Calu3 (cell line): ENCODE measurements at regions of chrX and their contacts with region 1.

Region 1: DNA sequence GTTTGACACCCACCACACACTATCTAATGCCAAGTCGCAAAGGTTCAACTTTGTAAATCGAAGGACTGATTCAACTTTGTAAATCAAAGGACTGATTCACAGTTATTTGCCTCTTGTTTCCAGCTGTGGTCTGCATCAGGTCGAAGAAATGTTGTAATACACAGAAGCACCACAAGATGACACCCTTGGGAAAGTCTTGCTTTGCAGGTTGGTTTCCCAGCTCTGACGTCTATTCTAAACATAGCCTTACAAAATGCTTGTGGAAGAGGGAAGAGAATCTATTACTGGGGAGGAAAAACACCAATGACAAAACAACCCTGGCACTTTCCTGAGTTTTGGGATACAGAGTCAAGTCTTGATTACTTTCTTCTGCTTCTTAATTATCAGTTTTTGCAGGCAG is 35.3 kb downstream of the SUPT20HL1 start:
- DNase-seq: peak; percentile 61
- H3K4me3 Mint-ChIP-seq: no peak overlapping the region
- H3K27ac Mint-ChIP-seq: no peak overlapping the region
- H3K4me1 Mint-ChIP-seq: no peaks in the 10 kb centered on the region
- H3K27me3 Mint-ChIP-seq: peaks cover 56% of the 10 kb centered on the region
- CTCF ChIP-seq: no peak

Region 2: GRCh38 chrX:24259544-24260240 is 136.1 kb before region 1 on chrX:
- CTCF ChIA-PET with region 1: interaction called, 4 read pairs
- intact Hi-C with region 1: loop called (anchors 10 kb)
- DNase-seq: peak; percentile 43
- H3K4me3 Mint-ChIP-seq: no peak overlapping the region
- H3K27ac Mint-ChIP-seq: no peak overlapping the region
- H3K4me1 Mint-ChIP-seq: peaks cover 20% of the 10 kb centered on the region
- H3K27me3 Mint-ChIP-seq: no peaks in the 10 kb centered on the region
- CTCF ChIP-seq: no peak

Region 3: GRCh38 chrX:24271262-24271661 is 124.5 kb before region 1 on chrX:
- CTCF ChIA-PET with region 1: no interaction called
- intact Hi-C with region 1: no loop called
- DNase-seq: no peak
- H3K4me3 Mint-ChIP-seq: no peak overlapping the region
- H3K27ac Mint-ChIP-seq: no peak overlapping the region
- H3K4me1 Mint-ChIP-seq: no peaks in the 10 kb centered on the region
- H3K27me3 Mint-ChIP-seq: peaks cover 49% of the 10 kb centered on the region
- CTCF ChIP-seq: no peak

Region 4: DNA sequence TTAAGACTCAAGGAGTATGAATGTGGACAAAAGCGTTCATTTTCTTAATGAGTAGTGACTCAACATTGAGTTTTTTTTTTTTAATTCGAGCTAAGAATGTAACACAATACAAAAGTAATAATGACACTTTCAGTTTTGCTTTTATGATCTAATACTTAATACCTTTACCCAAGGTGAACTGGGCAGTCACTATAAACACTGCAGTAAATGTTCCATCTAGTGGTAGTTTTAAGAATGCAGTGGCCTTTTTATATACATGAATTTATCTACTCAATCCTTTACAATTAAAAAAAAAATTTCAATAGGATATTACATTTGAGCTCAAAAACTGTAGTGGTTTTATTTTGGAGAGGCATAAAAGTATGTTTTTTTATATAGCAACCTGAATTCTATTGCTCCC is 103.2 kb after region 1 on chrX:
- CTCF ChIA-PET with region 1: interaction called, 57 read pairs
- intact Hi-C with region 1: loop called (anchors 1 kb)
- DNase-seq: no peak
- H3K4me3 Mint-ChIP-seq: no peak overlapping the region
- H3K27ac Mint-ChIP-seq: no peak overlapping the region
- H3K4me1 Mint-ChIP-seq: peaks cover 4% of the 10 kb centered on the region
- H3K27me3 Mint-ChIP-seq: no peaks in the 10 kb centered on the region
- CTCF ChIP-seq: no peak

Region 5: DNA sequence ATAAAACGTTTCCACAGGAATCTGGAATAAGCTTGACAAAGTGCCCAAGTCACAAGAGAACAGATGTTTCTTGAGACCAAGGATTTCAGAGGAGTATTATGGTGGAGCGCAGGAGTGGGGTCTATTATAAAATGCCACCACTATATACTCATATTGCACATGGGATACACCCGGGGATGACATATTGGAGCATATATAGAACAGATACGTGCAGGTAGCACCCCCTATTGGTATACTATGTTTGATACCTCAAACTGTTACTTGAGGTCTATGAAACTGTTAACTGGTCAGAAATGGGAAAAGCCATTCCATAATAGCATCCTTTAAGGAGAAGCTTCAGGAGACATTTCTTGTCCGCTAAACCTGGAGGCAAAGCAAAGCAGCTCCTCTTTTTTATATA is 165.3 kb after region 1 on chrX:
- CTCF ChIA-PET with region 1: no interaction called
- intact Hi-C with region 1: loop called (anchors 2 kb)
- DNase-seq: no peak
- H3K4me3 Mint-ChIP-seq: no peak overlapping the region
- H3K27ac Mint-ChIP-seq: no peak overlapping the region
- H3K4me1 Mint-ChIP-seq: no peaks in the 10 kb centered on the region
- H3K27me3 Mint-ChIP-seq: peaks cover 21% of the 10 kb centered on the region
- CTCF ChIP-seq: no peak

Region 6: DNA sequence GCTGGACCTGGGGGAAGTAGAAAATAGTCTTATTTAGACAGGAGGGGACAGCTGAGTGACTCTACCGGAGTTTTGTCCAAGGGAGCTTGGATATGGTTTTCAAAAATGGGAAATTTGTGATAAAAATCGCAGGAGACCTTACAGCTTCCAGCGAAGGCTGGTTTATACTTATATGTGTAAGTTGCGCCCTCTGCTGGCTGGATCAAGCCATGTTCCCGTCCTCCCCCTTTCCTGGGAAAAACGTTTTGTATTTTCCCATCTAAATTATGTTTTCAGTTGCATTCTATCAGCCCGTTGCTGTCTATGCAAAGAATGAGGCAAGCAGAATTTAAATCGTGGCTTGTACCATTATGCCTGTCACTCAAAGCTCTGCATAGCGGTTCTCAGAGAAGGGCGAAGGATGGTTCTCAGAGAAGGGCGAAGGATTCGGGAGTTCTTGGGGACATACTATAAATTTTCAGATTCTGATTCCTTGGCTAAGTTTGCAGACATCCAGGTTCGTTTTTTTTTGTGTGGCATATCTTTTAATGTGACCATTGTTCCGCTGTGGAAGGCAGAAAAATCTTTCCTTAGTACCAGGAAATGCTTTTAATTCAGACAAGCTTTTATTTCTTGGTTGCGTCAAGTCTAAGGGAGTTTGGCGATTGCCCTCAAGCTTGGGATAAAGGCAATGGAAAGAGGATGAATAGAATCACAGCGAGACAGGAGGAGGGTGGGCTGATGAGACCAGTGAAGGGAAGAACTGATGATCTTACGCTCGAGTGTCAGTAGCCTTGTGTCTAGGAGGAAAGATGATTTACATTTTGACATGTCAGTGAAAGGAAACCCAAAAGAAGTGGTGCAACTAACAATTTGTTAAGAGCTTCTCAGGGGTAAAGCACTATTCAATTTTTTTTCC is 748.5 kb after region 1 on chrX:
- CTCF ChIA-PET with region 1: no interaction called
- intact Hi-C with region 1: loop called (anchors 10 kb)
- DNase-seq: peak; percentile 57
- H3K4me3 Mint-ChIP-seq: no peak overlapping the region
- H3K27ac Mint-ChIP-seq: no peak overlapping the region
- H3K4me1 Mint-ChIP-seq: no peaks in the 10 kb centered on the region
- H3K27me3 Mint-ChIP-seq: peaks cover 12% of the 10 kb centered on the region
- CTCF ChIP-seq: peak; percentile 58